ENCODE measurements at regions of chr19 and their contacts with region 1.

Region 1: DNA sequence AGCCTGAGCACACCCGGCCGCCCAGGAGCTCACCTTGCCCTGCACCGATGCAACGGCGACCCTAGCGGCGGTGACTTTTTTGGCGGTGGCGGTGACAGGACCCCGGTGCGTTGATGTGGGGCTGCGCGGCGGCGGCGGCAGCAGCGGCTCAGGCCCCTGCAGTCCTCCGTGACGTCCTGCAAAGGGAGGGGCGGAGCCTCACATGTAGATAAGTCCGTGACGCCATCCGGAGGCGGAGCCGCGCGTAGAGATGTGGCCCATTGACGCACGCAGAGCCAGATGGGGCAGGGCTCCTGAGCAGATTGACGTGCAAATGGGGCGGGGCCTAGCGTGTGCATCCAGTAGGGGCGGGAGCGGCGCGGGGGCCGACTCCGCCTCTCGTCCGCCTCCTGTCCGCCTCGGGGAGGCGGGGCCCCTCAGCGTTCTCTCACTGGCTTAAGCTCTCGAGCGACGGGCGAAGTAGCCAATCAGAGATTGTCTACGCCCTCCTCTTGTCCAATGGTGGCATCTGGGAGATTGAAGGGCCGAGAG is at the start of gene RAB3A:
- DNase-seq: peak; percentile 95 to 100 (median 99)
- ATAC-seq: peak; percentile 95
- H3K4me3 ChIP-seq: peak within 1 kb of the TSS; percentile 90
- H3K4me3 Mint-ChIP-seq: peak within 1 kb of the TSS; percentile 83 to 98 (median 96)
- H3K27ac ChIP-seq: peak within 1 kb of the TSS; percentile 85
- H3K27ac Mint-ChIP-seq: peak within 1 kb of the TSS; percentile 87 to 99 (median 97)
- H3K4me1 ChIP-seq: peaks cover 15 to 16% of the 10 kb centered on the region in 2 donors
- H3K4me1 Mint-ChIP-seq: peaks cover 11 to 26% (median 22%) of the 10 kb centered on the region in 7 donors
- H3K27me3 ChIP-seq: no peaks in the 10 kb centered on the region
- H3K27me3 Mint-ChIP-seq: peaks cover 0 to 8% (median 0%) of the 10 kb centered on the region in 5 donors
- total RNA-seq, gene RAB3A: 5.7 to 16.7 (median 8.8) TPM

Region 2: GRCh38 chr19:18097217-18097992 is 106.5 kb before region 1 on chr19 and contains the start of gene MAST3:
- CTCF ChIA-PET with region 1: no interaction called
- POLR2A ChIA-PET with region 1: no interaction called
- intact Hi-C with region 1: no loop called
- DNase-seq: peak; percentile 82 to 96 (median 93)
- ATAC-seq: peak; percentile 100
- H3K4me3 ChIP-seq: peak within 1 kb of the TSS; percentile 31
- H3K4me3 Mint-ChIP-seq: peak within 1 kb of the TSS; percentile 86 to 89 (median 87)
- H3K27ac ChIP-seq: peak within 1 kb of the TSS; percentile 70
- H3K27ac Mint-ChIP-seq: peak within 1 kb of the TSS in 8 of 9 donors; percentile 73 to 94 (median 87)
- H3K4me1 ChIP-seq: peaks cover 21 to 22% of the 10 kb centered on the region in 2 donors
- H3K4me1 Mint-ChIP-seq: peaks cover 18 to 55% (median 49%) of the 10 kb centered on the region in 7 donors
- H3K27me3 ChIP-seq: no peaks in the 10 kb centered on the region
- H3K27me3 Mint-ChIP-seq: peaks cover 0 to 16% (median 0%) of the 10 kb centered on the region in 5 donors
- total RNA-seq, gene MAST3: 36.0 to 58.7 (median 50.6) TPM

Region 3: DNA sequence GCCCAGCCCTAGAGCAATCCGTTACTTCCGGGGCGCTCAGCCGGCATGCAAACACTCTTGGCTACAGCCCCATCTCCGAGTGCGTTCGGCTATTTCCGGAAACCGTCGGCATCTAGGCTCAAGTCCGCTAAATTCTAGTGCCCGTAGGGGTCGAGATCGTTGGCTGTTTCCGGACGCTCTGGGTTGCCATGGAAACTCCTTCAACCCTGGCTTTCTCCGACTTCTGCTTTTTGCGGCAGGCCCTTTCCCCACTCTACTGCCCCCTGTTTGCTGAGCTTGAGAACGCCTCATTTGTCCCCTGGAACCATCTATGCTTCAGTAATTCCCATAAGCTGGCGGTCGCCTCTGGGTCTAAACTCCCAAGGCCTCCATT is 51.5 kb before region 1 on chr19:
- CTCF ChIA-PET with region 1: no interaction called
- POLR2A ChIA-PET with region 1: interaction called, 3 read pairs
- intact Hi-C with region 1: loop called (anchors 1 kb)
- DNase-seq: peak; percentile 92 to 99 (median 97)
- ATAC-seq: peak; percentile 76
- H3K4me3 ChIP-seq: peak overlapping the region; percentile 82
- H3K4me3 Mint-ChIP-seq: peak overlapping the region; percentile 81 to 95 (median 88)
- H3K27ac ChIP-seq: peak overlapping the region; percentile 88
- H3K27ac Mint-ChIP-seq: peak overlapping the region; percentile 89 to 97 (median 95)
- H3K4me1 ChIP-seq: peaks cover 16 to 20% of the 10 kb centered on the region in 2 donors
- H3K4me1 Mint-ChIP-seq: peaks cover 9 to 32% (median 24%) of the 10 kb centered on the region in 7 donors
- H3K27me3 ChIP-seq: no peaks in the 10 kb centered on the region
- H3K27me3 Mint-ChIP-seq: no peaks in the 10 kb centered on the region

Region 4: GRCh38 chr19:18173572-18174288 is 30.2 kb before region 1 on chr19 and contains the start of gene IFI30:
- CTCF ChIA-PET with region 1: interaction called, 3 read pairs
- POLR2A ChIA-PET with region 1: no interaction called
- intact Hi-C with region 1: loop called in 1 of 2 experiments (anchors 1 kb)
- DNase-seq: peak in 8 of 9 donors; percentile 41 to 76 (median 52)
- ATAC-seq: peak; percentile 79
- H3K4me3 ChIP-seq: peak within 1 kb of the TSS; percentile 78
- H3K4me3 Mint-ChIP-seq: peak within 1 kb of the TSS; percentile 84 to 94 (median 90)
- H3K27ac ChIP-seq: peak within 1 kb of the TSS; percentile 67
- H3K27ac Mint-ChIP-seq: peak within 1 kb of the TSS; percentile 62 to 89 (median 79)
- H3K4me1 ChIP-seq: peaks cover 5 to 13% of the 10 kb centered on the region in 2 donors
- H3K4me1 Mint-ChIP-seq: peaks cover 0 to 29% (median 10%) of the 10 kb centered on the region in 7 donors
- H3K27me3 ChIP-seq: no peaks in the 10 kb centered on the region
- H3K27me3 Mint-ChIP-seq: no peaks in the 10 kb centered on the region
- total RNA-seq, gene IFI30: 51.3 to 514 (median 59.5) TPM

Region 5: GRCh38 chr19:18251587-18252369 is 47.9 kb after region 1 on chr19:
- CTCF ChIA-PET with region 1: interaction called, 95 read pairs
- POLR2A ChIA-PET with region 1: interaction called, 6 read pairs
- intact Hi-C with region 1: loop called (anchors 1 kb)
- DNase-seq: peak; percentile 65 to 87 (median 77)
- ATAC-seq: peak; percentile 90
- H3K4me3 ChIP-seq: no peak overlapping the region
- H3K4me3 Mint-ChIP-seq: no peak overlapping the region
- H3K27ac ChIP-seq: no peak overlapping the region
- H3K27ac Mint-ChIP-seq: peak overlapping the region in 2 of 9 donors; percentile 2 to 62
- H3K4me1 ChIP-seq: no peaks in the 10 kb centered on the region
- H3K4me1 Mint-ChIP-seq: peaks cover 0 to 7% (median 5%) of the 10 kb centered on the region in 7 donors
- H3K27me3 ChIP-seq: no peaks in the 10 kb centered on the region
- H3K27me3 Mint-ChIP-seq: peaks cover 22 to 36% (median 34%) of the 10 kb centered on the region in 5 donors

Region 6: DNA sequence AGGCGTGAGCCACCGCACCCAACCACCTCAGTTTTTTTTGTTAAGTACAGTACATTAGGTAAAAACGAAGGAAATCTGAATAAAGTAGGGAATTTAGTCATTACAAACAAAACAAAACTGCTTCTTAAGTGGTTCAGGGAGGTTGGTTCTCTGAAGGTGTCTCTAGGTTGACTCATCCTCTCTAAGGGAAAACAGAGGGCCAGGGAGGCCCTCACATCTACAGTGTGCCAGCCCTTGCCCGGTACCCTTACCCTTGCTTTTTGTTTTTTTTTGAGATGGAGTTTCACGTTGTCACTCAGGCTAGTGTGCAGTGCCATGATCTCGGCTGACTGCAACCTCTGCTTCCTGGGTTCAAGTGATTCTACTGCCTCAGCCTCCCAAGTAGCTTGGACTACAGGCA is 94.7 kb after region 1 on chr19:
- CTCF ChIA-PET with region 1: no interaction called
- POLR2A ChIA-PET with region 1: no interaction called
- intact Hi-C with region 1: no loop called
- DNase-seq: no peak
- ATAC-seq: no peak
- H3K4me3 ChIP-seq: no peak overlapping the region
- H3K4me3 Mint-ChIP-seq: peak overlapping the region in 1 of 10 donors; percentile 33
- H3K27ac ChIP-seq: no peak overlapping the region
- H3K27ac Mint-ChIP-seq: peak overlapping the region in 4 of 9 donors; percentile 31 to 86 (median 68)
- H3K4me1 ChIP-seq: peaks cover 16 to 26% of the 10 kb centered on the region in 2 donors
- H3K4me1 Mint-ChIP-seq: peaks cover 14 to 45% (median 24%) of the 10 kb centered on the region in 7 donors
- H3K27me3 ChIP-seq: no peaks in the 10 kb centered on the region
- H3K27me3 Mint-ChIP-seq: no peaks in the 10 kb centered on the region

Region 7: DNA sequence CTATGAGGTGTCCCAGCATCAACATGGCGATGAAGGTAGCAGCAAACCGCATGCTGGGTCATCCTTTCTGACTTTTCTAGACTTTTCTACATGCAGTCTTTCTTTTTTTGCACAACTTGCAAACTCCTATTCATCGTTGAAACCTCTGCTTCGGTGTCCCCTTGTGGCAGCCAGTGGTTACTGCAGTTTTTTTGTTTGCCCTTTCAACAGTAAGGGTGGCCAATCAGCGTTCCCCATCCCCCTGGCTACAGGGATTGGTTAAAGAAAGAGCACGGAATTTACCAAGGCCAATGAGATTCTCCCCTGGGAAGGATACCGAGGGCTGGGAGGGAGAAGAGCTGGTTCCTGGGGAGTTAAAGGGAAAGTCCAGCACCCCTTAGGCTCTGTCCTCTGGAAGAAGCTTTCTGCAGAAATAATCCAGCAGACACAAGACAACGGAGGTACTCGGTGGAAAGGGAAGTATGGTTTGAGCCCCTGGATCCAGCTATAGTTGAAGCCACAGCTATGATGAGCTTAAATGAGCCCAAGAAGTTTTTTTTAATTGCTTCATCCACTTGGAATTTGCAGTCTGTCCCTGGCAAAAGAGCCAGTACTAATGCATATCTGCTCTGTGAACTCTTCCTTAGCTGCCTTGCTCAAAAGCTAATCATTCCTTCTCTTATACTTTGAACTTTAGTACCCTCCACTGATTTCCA is 124.6 kb after region 1 on chr19:
- CTCF ChIA-PET with region 1: interaction called, 5 read pairs
- POLR2A ChIA-PET with region 1: interaction called, 3 read pairs
- intact Hi-C with region 1: loop called (anchors 1 kb)
- DNase-seq: peak; percentile 55 to 92 (median 90)
- ATAC-seq: peak; percentile 99
- H3K4me3 ChIP-seq: peak overlapping the region; percentile 52
- H3K4me3 Mint-ChIP-seq: peak overlapping the region; percentile 62 to 87 (median 78)
- H3K27ac ChIP-seq: peak overlapping the region; percentile 45
- H3K27ac Mint-ChIP-seq: peak overlapping the region in 8 of 9 donors; percentile 38 to 75 (median 72)
- H3K4me1 ChIP-seq: peaks cover 12% of the 10 kb centered on the region in 2 donors
- H3K4me1 Mint-ChIP-seq: peaks cover 13 to 23% (median 20%) of the 10 kb centered on the region in 7 donors
- H3K27me3 ChIP-seq: no peaks in the 10 kb centered on the region
- H3K27me3 Mint-ChIP-seq: no peaks in the 10 kb centered on the region